ENCODE measurements at regions of chr12 and their contacts with region 1.

Region 1: DNA sequence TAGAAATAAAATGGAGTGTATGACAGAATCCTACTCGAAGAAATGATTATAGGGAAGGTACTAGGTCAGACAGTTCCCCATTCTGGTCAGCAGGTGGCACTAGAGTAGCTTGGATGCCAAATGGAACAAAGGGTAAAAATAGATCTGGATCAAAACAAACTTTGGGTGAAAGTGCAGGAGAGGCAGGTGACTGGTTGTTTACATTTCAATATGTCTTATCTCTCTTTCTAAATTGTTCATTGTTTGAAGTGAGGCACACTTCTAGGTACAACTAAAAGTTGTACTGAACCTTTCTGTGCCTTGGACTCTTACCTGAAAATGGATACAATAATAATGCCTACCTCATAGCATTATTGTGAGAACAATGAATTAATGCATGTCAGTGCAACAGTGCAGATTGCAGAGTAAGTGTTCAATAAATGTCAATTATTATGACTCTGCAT is 62.0 kb upstream of the OSBPL8 start:
- DNase-seq: peak; percentile 75
- ATAC-seq: peak; percentile 87
- H3K4me3 ChIP-seq: no peak overlapping the region
- H3K4me3 Mint-ChIP-seq: no peak overlapping the region
- H3K27ac ChIP-seq: no peak overlapping the region
- H3K27ac Mint-ChIP-seq: no peak overlapping the region
- H3K4me1 ChIP-seq: peaks cover 0 to 4% of the 10 kb centered on the region in 2 donors
- H3K4me1 Mint-ChIP-seq: peaks cover 4% of the 10 kb centered on the region
- H3K27me3 ChIP-seq: no peaks in the 10 kb centered on the region
- H3K27me3 Mint-ChIP-seq: no peaks in the 10 kb centered on the region
- CTCF ChIP-seq: peak; percentile 99

Region 2: DNA sequence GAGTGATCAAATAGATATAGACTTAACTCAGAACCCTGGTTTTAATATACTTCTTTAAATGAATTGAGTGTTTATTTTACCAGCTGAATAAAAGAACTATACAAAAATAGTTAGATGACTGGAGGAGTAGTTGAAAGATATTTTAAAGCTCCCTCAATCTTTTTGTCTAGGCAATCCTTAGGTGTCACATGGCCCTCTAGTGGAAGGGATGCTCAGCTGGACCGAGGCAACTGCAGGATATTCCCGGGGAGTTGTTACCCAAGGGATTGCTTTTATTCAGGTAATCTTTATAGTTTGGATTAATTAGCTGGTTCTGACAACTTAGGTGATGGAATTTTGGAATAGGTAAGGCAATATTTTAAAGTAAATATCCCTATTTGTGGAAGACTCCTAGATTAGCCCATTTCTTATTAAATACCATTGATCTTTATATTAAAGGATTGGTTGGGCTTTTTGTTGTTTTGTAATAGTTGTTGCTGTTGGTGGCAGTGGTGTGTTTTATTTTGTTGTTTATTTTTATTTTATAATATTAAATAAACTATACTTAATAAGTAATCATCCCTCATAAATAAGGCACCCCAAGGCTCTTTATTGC is 199.4 kb after region 1 on chr12:
- CTCF ChIA-PET with region 1: interaction called, 12 read pairs
- POLR2A ChIA-PET with region 1: no interaction called
- intact Hi-C with region 1: no loop called
- DNase-seq: no peak
- ATAC-seq: no peak
- H3K4me3 ChIP-seq: no peak overlapping the region
- H3K4me3 Mint-ChIP-seq: no peak overlapping the region
- H3K27ac ChIP-seq: no peak overlapping the region
- H3K27ac Mint-ChIP-seq: no peak overlapping the region
- H3K4me1 ChIP-seq: no peaks in the 10 kb centered on the region
- H3K4me1 Mint-ChIP-seq: no peaks in the 10 kb centered on the region
- H3K27me3 ChIP-seq: no peaks in the 10 kb centered on the region
- H3K27me3 Mint-ChIP-seq: no peaks in the 10 kb centered on the region
- CTCF ChIP-seq: no peak

Region 3: DNA sequence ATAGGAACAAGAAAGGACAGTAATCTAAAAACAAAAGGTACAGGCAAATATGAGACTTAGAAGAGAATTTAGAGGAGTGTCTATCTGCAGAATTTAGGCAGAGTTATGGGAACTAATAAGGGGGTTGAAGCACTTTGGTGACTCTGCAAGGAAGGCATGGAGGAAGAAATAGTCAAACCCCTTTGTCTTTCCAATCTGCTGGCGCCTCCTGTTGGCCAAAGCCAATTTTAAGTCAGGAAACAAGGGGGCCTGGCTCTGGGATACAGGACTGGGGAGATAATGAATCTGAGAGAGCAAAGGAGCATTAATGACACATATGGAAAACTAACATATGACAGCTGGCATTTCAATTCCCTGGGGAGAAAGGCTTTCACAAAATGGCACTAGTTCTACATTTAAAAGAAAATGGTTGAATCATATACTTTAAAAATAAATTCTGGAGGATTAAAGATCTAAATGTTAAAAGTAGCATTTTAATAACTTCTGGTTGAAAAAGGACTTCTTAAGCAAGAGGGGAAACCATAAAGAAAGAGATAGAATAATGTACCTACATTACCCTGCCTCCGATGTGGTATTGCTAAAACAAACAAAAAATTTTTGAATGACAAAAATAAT is 305.7 kb after region 1 on chr12:
- CTCF ChIA-PET with region 1: interaction called, 3 read pairs
- POLR2A ChIA-PET with region 1: no interaction called
- intact Hi-C with region 1: loop called (anchors 5 kb)
- DNase-seq: peak; percentile 4
- ATAC-seq: no peak
- H3K4me3 ChIP-seq: no peak overlapping the region
- H3K4me3 Mint-ChIP-seq: no peak overlapping the region
- H3K27ac ChIP-seq: no peak overlapping the region
- H3K27ac Mint-ChIP-seq: no peak overlapping the region
- H3K4me1 ChIP-seq: no peaks in the 10 kb centered on the region
- H3K4me1 Mint-ChIP-seq: no peaks in the 10 kb centered on the region
- H3K27me3 ChIP-seq: peaks cover 0 to 3% (median 0%) of the 10 kb centered on the region in 4 experiments
- H3K27me3 Mint-ChIP-seq: peaks cover 20% of the 10 kb centered on the region
- CTCF ChIP-seq: no peak

Region 4: GRCh38 chr12:77010691-77011548 is 389.3 kb after region 1 on chr12:
- CTCF ChIA-PET with region 1: interaction called, 46 read pairs
- POLR2A ChIA-PET with region 1: no interaction called
- intact Hi-C with region 1: no loop called
- DNase-seq: peak; percentile 57
- ATAC-seq: peak; percentile 69
- H3K4me3 ChIP-seq: no peak overlapping the region
- H3K4me3 Mint-ChIP-seq: no peak overlapping the region
- H3K27ac ChIP-seq: no peak overlapping the region
- H3K27ac Mint-ChIP-seq: no peak overlapping the region
- H3K4me1 ChIP-seq: no peaks in the 10 kb centered on the region
- H3K4me1 Mint-ChIP-seq: peaks cover 3% of the 10 kb centered on the region
- H3K27me3 ChIP-seq: peaks cover 0 to 3% (median 0%) of the 10 kb centered on the region in 4 experiments
- H3K27me3 Mint-ChIP-seq: peaks cover 16% of the 10 kb centered on the region
- CTCF ChIP-seq: peak; percentile 99

Measured in B cell (primary cell).